ENCODE measurements at regions of chr17 and their contacts with region 1.

Region 1: GRCh38 chr17:59311130-59311920 is 20.1 kb upstream of the YPEL2 start:
- DNase-seq: peak; percentile 37
- H3K4me3 ChIP-seq: no peak overlapping the region
- H3K27ac ChIP-seq: no peak overlapping the region
- H3K4me1 ChIP-seq: no peaks in the 10 kb centered on the region
- H3K27me3 ChIP-seq: no peaks in the 10 kb centered on the region
- CTCF ChIP-seq: peak; percentile 73

Region 2: GRCh38 chr17:59331129-59331928 is 20.0 kb after region 1 on chr17 and contains the start of gene YPEL2:
- CTCF ChIA-PET with region 1: interaction called, 10 read pairs
- dilution Hi-C with region 1: no loop called
- in situ Hi-C with region 1: no loop called
- intact Hi-C with region 1: no loop called
- DNase-seq: peak; percentile 83
- H3K4me3 ChIP-seq: peak within 1 kb of the TSS; percentile 79 to 89 (median 81)
- H3K27ac ChIP-seq: peak within 1 kb of the TSS; percentile 8
- H3K4me1 ChIP-seq: peaks cover 24% of the 10 kb centered on the region
- H3K27me3 ChIP-seq: peaks cover 3% of the 10 kb centered on the region
- CTCF ChIP-seq: no peak
- total RNA-seq, gene YPEL2: 2.2 to 6.8 TPM

Region 3: GRCh38 chr17:59440784-59441441 is 129.6 kb after region 1 on chr17:
- CTCF ChIA-PET with region 1: interaction called, 5 read pairs
- dilution Hi-C with region 1: no loop called
- in situ Hi-C with region 1: loop called (anchors 5 kb)
- intact Hi-C with region 1: loop called (anchors 1 kb)
- DNase-seq: peak; percentile 72
- H3K4me3 ChIP-seq: no peak overlapping the region
- H3K27ac ChIP-seq: no peak overlapping the region
- H3K4me1 ChIP-seq: no peaks in the 10 kb centered on the region
- H3K27me3 ChIP-seq: no peaks in the 10 kb centered on the region
- CTCF ChIP-seq: peak; percentile 78 to 82

Region 4: DNA sequence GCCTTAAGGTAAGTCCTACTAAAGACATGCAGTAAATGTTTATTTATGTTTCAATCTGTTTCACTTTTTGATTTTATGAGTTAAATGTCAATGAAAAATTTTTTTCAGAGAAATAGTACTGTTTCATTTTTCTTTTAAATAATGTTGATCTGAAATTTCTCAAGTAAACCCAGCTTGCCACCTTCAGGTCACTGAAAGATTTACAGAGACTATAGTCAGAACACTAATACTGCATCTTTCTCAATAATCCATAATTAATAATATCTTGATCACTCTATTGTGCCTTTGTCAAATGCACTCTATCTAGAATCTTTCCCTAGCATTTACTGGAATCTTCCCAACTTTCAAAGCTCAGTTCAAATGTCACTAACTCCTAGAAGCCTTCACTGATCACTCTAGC is 247.7 kb after region 1 on chr17:
- CTCF ChIA-PET with region 1: no interaction called
- dilution Hi-C with region 1: no loop called
- in situ Hi-C with region 1: loop called in 1 of 2 experiments (anchors 25 kb)
- intact Hi-C with region 1: loop called (anchors 2 kb)
- DNase-seq: no peak
- H3K4me3 ChIP-seq: no peak overlapping the region
- H3K27ac ChIP-seq: no peak overlapping the region
- H3K4me1 ChIP-seq: no peaks in the 10 kb centered on the region
- H3K27me3 ChIP-seq: no peaks in the 10 kb centered on the region
- CTCF ChIP-seq: peak in 1 of 2 donors; percentile 36

Region 5: GRCh38 chr17:59746849-59747445 is 435.6 kb after region 1 on chr17:
- CTCF ChIA-PET with region 1: no interaction called
- dilution Hi-C with region 1: no loop called
- in situ Hi-C with region 1: no loop called
- intact Hi-C with region 1: loop called (anchors 5 kb)
- DNase-seq: peak; percentile 37
- H3K4me3 ChIP-seq: no peak overlapping the region
- H3K27ac ChIP-seq: no peak overlapping the region
- H3K4me1 ChIP-seq: no peaks in the 10 kb centered on the region
- H3K27me3 ChIP-seq: no peaks in the 10 kb centered on the region
- CTCF ChIP-seq: peak; percentile 48 to 63